AG04449 (cell line): ENCODE measurements at regions of chr13 and their contacts with region 1.

Region 1: DNA sequence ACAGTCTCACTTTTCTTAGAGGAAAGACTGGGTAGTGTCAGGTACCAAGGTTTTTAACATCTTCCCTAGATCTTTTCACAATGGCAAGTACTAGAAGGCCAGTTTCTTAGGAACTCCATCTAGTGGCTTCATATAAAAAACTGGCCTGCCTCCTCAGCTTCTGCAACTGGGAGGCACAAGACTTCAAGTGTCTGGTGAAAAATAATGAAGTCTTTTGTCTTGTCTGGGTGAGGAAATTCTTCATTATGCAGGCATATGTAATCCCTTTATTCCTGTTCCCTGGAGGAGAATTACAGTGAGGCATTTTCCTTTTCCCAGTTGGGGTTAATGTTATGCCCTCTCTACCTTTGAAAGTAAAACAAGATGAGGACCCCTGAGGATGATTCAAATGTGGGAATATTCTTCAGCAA is 300.5 kb downstream of the NALCN start:
- DNase-seq: no peak
- H3K4me3 ChIP-seq: no peak overlapping the region
- CTCF ChIP-seq: no peak

Region 2: DNA sequence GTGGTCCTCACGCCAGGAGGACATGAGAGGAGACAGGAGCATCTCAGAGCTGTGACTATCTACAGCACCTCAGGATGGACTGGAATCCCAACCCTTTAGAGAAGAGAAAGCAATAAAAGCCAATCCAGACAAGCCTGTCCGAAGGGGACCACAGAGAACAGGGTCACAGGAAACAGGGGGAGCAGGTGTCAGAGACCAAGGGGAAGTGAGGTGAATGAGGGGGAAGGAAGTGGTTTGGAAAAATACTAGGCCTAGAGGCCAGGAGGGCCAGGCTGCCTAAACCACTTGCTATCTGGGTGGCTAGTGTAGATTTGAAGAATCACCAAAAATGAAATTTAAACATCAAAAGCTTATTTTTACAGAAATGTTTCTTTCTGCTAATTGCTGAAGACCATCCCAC is 457.4 kb before region 1 on chr13:
- CTCF ChIA-PET with region 1: no interaction called
- POLR2A ChIA-PET with region 1: no interaction called
- DNase-seq: no peak
- H3K4me3 ChIP-seq: no peak overlapping the region
- CTCF ChIP-seq: no peak

Region 3: GRCh38 chr13:101098873-101099272 is 16.9 kb before region 1 on chr13:
- CTCF ChIA-PET with region 1: interaction called, 33 read pairs
- POLR2A ChIA-PET with region 1: no interaction called
- DNase-seq: no peak
- H3K4me3 ChIP-seq: no peak overlapping the region
- CTCF ChIP-seq: no peak

Region 4: GRCh38 chr13:101127741-101128353 is 12.1 kb after region 1 on chr13:
- CTCF ChIA-PET with region 1: interaction called, 20 read pairs
- POLR2A ChIA-PET with region 1: no interaction called
- DNase-seq: no peak
- H3K4me3 ChIP-seq: no peak overlapping the region
- CTCF ChIP-seq: peak; percentile 64